CD4-positive, alpha-beta T cell (primary cell): ENCODE measurements at regions of chr16 and their contacts with region 1.

Region 1: DNA sequence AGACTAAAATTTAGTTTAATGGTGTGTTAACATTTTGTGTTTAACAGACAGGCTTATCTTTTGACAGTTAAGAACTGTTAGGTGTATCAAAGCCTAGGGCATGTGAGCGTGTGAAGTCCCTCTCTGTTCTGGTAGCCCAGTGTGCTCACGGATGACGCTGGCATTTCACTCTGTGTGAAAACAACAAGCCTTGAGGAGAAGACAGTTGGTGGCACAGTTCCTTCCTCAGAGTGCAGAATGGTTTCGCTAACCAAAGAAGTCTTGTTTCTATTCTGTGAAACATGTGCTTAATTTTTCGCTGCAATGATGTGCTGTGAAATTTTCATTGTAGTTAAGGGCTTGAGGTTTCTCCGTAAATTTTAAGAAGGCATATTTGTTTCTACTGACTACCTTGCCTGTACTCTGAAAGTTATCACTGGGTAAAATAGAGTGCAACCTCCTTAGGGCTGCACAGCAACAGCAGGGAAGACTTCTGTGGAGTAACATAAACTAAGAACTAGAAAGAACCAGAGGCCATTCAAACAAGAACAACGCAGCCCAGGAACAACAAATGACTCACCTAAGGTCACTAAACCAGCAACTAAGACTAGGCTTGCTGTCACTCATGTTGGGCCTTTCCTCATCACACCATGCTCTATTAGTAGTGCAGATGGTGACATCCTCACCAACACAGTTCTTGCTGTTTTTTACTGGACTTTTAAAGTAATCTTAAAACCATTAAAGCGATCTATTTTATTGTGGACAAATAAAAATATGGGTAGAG is 33.4 kb downstream of the BRD7 start:
- DNase-seq: peak in 10 of 14 experiments; percentile 37 to 90 (median 50)
- ATAC-seq: peak; percentile 73
- H3K4me3 ChIP-seq: no peak overlapping the region
- H3K4me3 Mint-ChIP-seq: peak overlapping the region; percentile 80
- H3K27ac ChIP-seq: peak overlapping the region in 1 of 2 donors; percentile 25
- H3K27ac Mint-ChIP-seq: peak overlapping the region; percentile 98
- H3K4me1 ChIP-seq: peaks cover 41% of the 10 kb centered on the region
- H3K4me1 Mint-ChIP-seq: peaks cover 68% of the 10 kb centered on the region
- H3K27me3 ChIP-seq: no peaks in the 10 kb centered on the region
- H3K27me3 Mint-ChIP-seq: no peaks in the 10 kb centered on the region
- CTCF ChIP-seq: no peak

Region 2: GRCh38 chr16:50354629-50355456 is 19.5 kb after region 1 on chr16:
- CTCF ChIA-PET with region 1: interaction called, 91 read pairs
- POLR2A ChIA-PET with region 1: interaction called, 22 read pairs
- intact Hi-C with region 1: loop called in 1 of 2 experiments (anchors 2 kb)
- DNase-seq: peak in 3 of 14 experiments; percentile 49 to 51 (median 50)
- ATAC-seq: peak; percentile 55
- H3K4me3 ChIP-seq: no peak overlapping the region
- H3K4me3 Mint-ChIP-seq: no peak overlapping the region
- H3K27ac ChIP-seq: no peak overlapping the region
- H3K27ac Mint-ChIP-seq: peak overlapping the region; percentile 80
- H3K4me1 ChIP-seq: peaks cover 3% of the 10 kb centered on the region
- H3K4me1 Mint-ChIP-seq: peaks cover 52% of the 10 kb centered on the region
- H3K27me3 ChIP-seq: no peaks in the 10 kb centered on the region
- H3K27me3 Mint-ChIP-seq: no peaks in the 10 kb centered on the region
- CTCF ChIP-seq: peak; percentile 95

Region 3: GRCh38 chr16:50709053-50709684 is 373.8 kb after region 1 on chr16:
- CTCF ChIA-PET with region 1: no interaction called
- POLR2A ChIA-PET with region 1: no interaction called
- intact Hi-C with region 1: no loop called
- DNase-seq: peak in 3 of 14 experiments; percentile 35 to 55 (median 52)
- ATAC-seq: no peak
- H3K4me3 ChIP-seq: no peak overlapping the region
- H3K4me3 Mint-ChIP-seq: no peak overlapping the region
- H3K27ac ChIP-seq: peak overlapping the region in 1 of 2 donors; percentile 52
- H3K27ac Mint-ChIP-seq: peak overlapping the region; percentile 71
- H3K4me1 ChIP-seq: peaks cover 41% of the 10 kb centered on the region
- H3K4me1 Mint-ChIP-seq: peaks cover 50% of the 10 kb centered on the region
- H3K27me3 ChIP-seq: no peaks in the 10 kb centered on the region
- H3K27me3 Mint-ChIP-seq: no peaks in the 10 kb centered on the region
- CTCF ChIP-seq: no peak